CD8-positive, alpha-beta memory T cell (primary cell): ENCODE measurements at regions of chr11 and their contacts with region 1.

Region 1: GRCh38 chr11:123083623-123084029 is 21.7 kb upstream of the HSPA8 start:
- DNase-seq: peak in 4 of 5 donors; percentile 45 to 84 (median 52)
- H3K4me3 ChIP-seq: peak overlapping the region; percentile 20
- H3K4me3 Mint-ChIP-seq: peak overlapping the region; percentile 23 to 76 (median 57)
- H3K27ac ChIP-seq: no peak overlapping the region
- H3K27ac Mint-ChIP-seq: peak overlapping the region; percentile 68 to 91 (median 78)
- H3K4me1 ChIP-seq: peaks cover 48% of the 10 kb centered on the region
- H3K4me1 Mint-ChIP-seq: peaks cover 37 to 60% (median 43%) of the 10 kb centered on the region in 3 donors
- H3K27me3 ChIP-seq: no peaks in the 10 kb centered on the region
- H3K27me3 Mint-ChIP-seq: no peaks in the 10 kb centered on the region

Region 2: DNA sequence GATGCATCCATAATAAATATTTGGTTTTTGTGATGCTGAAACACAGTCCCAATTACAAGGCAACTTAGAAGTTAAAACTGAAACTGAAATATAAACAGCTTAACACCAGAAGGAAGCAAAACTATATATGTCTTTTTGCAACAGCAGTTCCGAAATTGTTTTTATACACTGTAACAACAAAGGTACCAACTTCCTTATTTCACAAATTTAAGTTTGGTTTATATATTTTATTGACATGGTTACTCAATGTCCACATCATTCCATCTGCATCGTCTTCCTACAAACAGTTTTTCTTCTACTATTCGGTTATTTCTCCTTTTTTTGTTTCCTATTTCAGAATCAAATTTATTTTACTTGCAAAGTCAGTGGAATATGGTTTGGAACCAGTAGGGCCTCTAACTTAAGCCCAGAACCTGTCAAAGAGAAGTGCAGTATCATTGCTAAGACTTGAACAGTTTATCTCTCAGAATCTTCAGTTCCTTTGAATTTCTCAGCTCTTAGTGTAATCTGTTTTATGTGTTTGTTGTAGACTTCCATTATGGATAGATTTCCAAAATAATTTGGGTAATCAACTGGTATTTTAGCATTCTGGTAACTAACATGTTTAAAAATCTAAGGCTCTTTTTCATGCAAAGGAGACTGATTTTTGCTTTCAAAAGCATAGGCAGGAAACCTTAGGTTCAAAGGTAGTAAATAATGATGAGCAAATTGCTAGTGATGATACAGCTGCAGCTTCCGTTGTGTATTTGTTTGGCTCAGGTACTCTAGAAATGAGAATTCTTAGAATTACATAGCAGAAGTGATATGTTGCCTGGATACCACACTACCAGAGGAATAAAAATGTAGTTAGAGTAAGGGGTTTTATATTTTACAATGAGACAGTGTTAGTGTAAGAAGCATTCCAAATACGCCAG is 13.5 kb before region 1 on chr11:
- CTCF ChIA-PET with region 1: interaction called, 184 read pairs
- POLR2A ChIA-PET with region 1: interaction called, 73 read pairs
- DNase-seq: peak in 1 of 5 donors; percentile 63
- H3K4me3 ChIP-seq: peak overlapping the region; percentile 48
- H3K4me3 Mint-ChIP-seq: peak overlapping the region; percentile 80 to 91 (median 87)
- H3K27ac ChIP-seq: peak overlapping the region; percentile 78
- H3K27ac Mint-ChIP-seq: peak overlapping the region; percentile 90 to 99 (median 96)
- H3K4me1 ChIP-seq: peaks cover 61% of the 10 kb centered on the region
- H3K4me1 Mint-ChIP-seq: peaks cover 53 to 72% (median 65%) of the 10 kb centered on the region in 3 donors
- H3K27me3 ChIP-seq: no peaks in the 10 kb centered on the region
- H3K27me3 Mint-ChIP-seq: no peaks in the 10 kb centered on the region

Region 3: GRCh38 chr11:123103326-123103980 is 19.8 kb after region 1 on chr11:
- CTCF ChIA-PET with region 1: interaction called, 12 read pairs
- POLR2A ChIA-PET with region 1: interaction called, 5 read pairs
- DNase-seq: peak in 3 of 5 donors; percentile 24 to 51 (median 40)
- H3K4me3 ChIP-seq: no peak overlapping the region
- H3K4me3 Mint-ChIP-seq: no peak overlapping the region
- H3K27ac ChIP-seq: no peak overlapping the region
- H3K27ac Mint-ChIP-seq: peak overlapping the region in 3 of 8 donors; percentile 7 to 54 (median 21)
- H3K4me1 ChIP-seq: peaks cover 9% of the 10 kb centered on the region
- H3K4me1 Mint-ChIP-seq: peaks cover 11 to 17% (median 15%) of the 10 kb centered on the region in 3 donors
- H3K27me3 ChIP-seq: no peaks in the 10 kb centered on the region
- H3K27me3 Mint-ChIP-seq: peaks cover 0 to under 1% of the 10 kb centered on the region in 2 donors

Region 4: DNA sequence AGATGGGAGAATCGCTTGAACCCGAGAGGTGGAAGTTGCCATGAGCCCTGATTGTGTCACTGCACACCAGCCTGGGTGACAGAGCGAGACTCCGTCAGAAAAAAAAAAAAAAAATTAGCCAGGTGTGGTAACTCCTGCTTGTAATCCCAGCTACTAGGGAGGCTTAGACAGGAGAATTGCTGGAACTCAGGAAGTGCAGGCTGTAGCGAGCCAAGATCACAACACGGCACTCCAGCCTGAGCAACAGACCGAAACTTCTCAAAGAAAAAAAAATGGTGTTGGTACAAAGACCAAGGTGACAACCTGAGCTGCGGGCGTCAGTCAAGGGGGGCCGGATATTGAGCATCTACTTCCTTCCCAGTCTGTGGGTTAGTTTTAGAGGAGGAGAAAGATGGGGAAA is 26.7 kb after region 1 on chr11:
- CTCF ChIA-PET with region 1: interaction called, 14 read pairs
- POLR2A ChIA-PET with region 1: interaction called, 9 read pairs
- DNase-seq: no peak
- H3K4me3 ChIP-seq: no peak overlapping the region
- H3K4me3 Mint-ChIP-seq: peak overlapping the region; percentile 15 to 74 (median 55)
- H3K27ac ChIP-seq: no peak overlapping the region
- H3K27ac Mint-ChIP-seq: peak overlapping the region in 6 of 8 donors; percentile 6 to 82 (median 38)
- H3K4me1 ChIP-seq: no peaks in the 10 kb centered on the region
- H3K4me1 Mint-ChIP-seq: peaks cover 5 to 12% (median 5%) of the 10 kb centered on the region in 3 donors
- H3K27me3 ChIP-seq: no peaks in the 10 kb centered on the region
- H3K27me3 Mint-ChIP-seq: peaks cover 0 to 3% of the 10 kb centered on the region in 2 donors